Motor neuron (in vitro differentiated cells): ENCODE measurements at regions of chr12 and their contacts with region 1.

Region 1: GRCh38 chr12:76790564-76791552 is 26.9 kb downstream of the ZDHHC17 start:
- ATAC-seq: no peak
- H3K4me3 ChIP-seq: no peak overlapping the region
- H3K27ac ChIP-seq: no peak overlapping the region
- H3K4me1 ChIP-seq: no peaks in the 10 kb centered on the region

Region 2: DNA sequence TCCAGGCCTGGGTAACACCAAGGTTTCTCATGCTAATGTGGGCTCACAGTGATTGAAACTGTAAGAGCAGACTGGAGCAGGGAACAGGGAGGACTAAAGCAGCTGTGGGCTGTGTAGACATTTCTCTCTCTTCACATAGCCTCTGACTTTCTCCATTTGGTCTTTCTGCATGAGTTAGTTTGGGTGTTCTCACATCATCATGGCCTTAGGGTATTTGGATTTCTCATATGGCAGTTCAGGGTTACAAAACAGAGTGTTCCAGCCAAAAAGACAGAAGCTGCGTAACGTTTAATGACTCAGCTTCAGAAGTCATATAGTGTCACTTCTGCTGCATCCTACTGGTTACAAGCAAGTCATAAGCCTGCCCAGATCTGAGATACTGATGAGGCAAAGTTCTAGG is 179.3 kb before region 1 on chr12:
- in situ Hi-C with region 1: loop called in 3 of 9 experiments (anchors 10 to 25 kb)
- ATAC-seq: peak in 3 of 8 experiments; percentile 85 to 98 (median 96)
- H3K4me3 ChIP-seq: no peak overlapping the region
- H3K27ac ChIP-seq: no peak overlapping the region
- H3K4me1 ChIP-seq: no peaks in the 10 kb centered on the region

Region 3: GRCh38 chr12:76621582-76622024 is 169.3 kb before region 1 on chr12:
- in situ Hi-C with region 1: loop called in 7 of 9 experiments (anchors 10 to 25 kb)
- ATAC-seq: peak; percentile 62 to 77 (median 66)
- H3K4me3 ChIP-seq: no peak overlapping the region
- H3K27ac ChIP-seq: no peak overlapping the region
- H3K4me1 ChIP-seq: peaks cover 0 to 12% of the 10 kb centered on the region in 2 donors

Region 4: DNA sequence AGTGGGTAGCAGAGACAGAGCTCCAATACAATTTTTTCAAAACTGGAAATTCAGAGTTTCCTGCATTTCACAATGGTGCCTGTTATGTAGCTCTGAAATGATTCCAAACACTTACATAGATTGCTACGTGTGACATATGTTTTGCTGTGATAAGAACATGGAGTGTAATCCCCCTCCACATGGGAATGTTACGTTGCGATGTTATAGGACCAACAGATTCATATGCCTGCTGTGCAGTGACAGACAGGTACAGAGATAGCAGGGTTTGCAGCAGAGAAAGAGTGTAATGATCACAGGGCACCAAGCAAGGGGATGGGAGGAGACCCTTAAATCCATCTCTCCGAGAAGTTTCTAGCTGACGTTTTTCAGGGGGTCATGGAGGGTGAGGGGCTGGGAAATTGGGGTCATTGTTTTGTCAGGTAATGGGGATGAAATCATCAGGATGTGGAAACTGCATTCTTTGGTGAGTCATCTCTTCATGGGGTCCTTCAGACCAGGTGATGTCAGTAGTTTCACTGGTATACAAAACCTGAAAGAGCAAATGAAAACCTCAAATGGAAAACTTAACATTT is 154.7 kb before region 1 on chr12:
- in situ Hi-C with region 1: loop called in 2 of 9 experiments (anchors 25 kb)
- ATAC-seq: peak in 4 of 8 experiments; percentile 16 to 70 (median 61)
- H3K4me3 ChIP-seq: no peak overlapping the region
- H3K27ac ChIP-seq: no peak overlapping the region
- H3K4me1 ChIP-seq: peaks cover 12 to 21% of the 10 kb centered on the region in 2 donors

Region 5: DNA sequence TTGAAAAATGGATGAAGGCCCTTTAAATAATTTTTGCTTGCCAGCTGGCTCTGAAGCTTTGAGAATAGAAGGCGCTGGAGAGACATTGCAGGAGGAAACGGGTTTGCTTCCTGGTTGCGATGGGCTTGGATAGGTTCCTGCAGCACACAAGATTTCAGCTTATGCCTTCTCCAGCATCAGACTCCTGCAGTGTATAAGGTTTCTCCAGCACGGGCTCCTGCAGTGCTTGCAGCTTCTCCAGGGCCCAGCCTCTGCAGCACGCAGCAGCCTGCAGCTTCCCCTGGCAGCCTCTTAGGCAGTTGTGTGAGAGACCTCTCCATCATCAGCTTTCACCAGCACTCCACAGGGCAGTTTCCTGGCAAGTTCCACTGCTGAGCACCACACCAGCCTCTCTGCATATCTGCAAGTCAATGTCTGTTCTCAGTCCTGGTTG is 105.6 kb before region 1 on chr12:
- in situ Hi-C with region 1: loop called in 1 of 9 experiments (anchors 25 kb)
- ATAC-seq: peak; percentile 65 to 94 (median 82)
- H3K4me3 ChIP-seq: no peak overlapping the region
- H3K27ac ChIP-seq: peak overlapping the region in 1 of 2 donors; percentile 26
- H3K4me1 ChIP-seq: peaks cover 4 to 13% of the 10 kb centered on the region in 2 donors

Region 6: DNA sequence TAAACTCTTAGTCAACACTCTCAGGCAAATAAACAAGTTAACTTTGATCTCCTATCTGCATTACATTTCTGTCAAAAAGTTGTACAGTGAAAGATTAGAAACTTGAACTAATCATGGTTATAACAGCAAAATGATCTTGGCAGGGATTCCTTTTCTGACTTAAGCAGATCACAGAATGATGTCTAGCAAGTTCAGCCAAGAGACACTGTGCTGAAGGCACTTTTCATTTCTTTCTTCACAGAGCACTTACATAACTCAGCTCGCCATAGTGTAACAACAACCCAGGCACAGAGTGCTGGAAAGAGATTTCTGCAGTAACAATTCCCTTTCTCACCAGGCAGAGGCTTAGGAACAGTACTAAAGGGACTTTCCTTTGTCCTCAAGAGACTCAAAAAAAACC is 107.6 kb after region 1 on chr12:
- in situ Hi-C with region 1: no loop called
- ATAC-seq: no peak
- H3K4me3 ChIP-seq: no peak overlapping the region
- H3K27ac ChIP-seq: no peak overlapping the region
- H3K4me1 ChIP-seq: no peaks in the 10 kb centered on the region